K562 (cell line): ENCODE measurements at regions of chr20 and their contacts with region 1.

Region 1: GRCh38 chr20:31414380-31414779 is 8.4 kb upstream of the DEFB121 start:
- DNase-seq: no peak
- ATAC-seq: no peak
- H3K4me3 ChIP-seq: no peak overlapping the region
- H3K27ac ChIP-seq: no peak overlapping the region
- H3K4me1 ChIP-seq: no peaks in the 10 kb centered on the region
- H3K27me3 ChIP-seq: no peaks in the 10 kb centered on the region; a peak in 1 of 5 replicates
- CTCF ChIP-seq: no peak
- EP300 ChIP-seq: no peak
- POLR2A ChIP-seq: no peak
- RAD21 ChIP-seq: no peak

Region 2: DNA sequence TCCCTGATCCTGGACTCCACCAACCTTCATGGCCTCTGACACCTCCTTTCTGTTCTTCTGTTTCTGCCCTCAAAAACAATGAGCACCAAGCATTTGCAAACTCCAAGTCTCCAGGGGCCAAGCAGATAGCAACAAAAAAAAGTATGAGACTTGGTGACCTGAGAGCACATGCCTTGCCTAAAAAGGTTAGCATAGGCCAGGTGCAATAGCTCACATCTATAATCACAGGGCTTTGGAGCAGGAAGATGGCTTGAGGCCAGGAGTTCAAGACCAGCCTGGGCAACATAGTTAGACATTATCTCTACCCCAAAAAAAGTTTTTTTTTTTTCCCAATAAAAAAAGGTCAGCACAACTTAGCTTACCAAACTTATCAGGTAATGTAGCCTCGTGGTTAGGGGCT is 86.1 kb after region 1 on chr20:
- CTCF ChIA-PET with region 1: interaction called, 4 read pairs
- POLR2A ChIA-PET with region 1: no interaction called
- in situ Hi-C with region 1: no loop called
- intact Hi-C with region 1: loop called (anchors 5 kb)
- DNase-seq: no peak
- ATAC-seq: no peak
- H3K4me3 ChIP-seq: no peak overlapping the region
- H3K27ac ChIP-seq: no peak overlapping the region
- H3K4me1 ChIP-seq: peaks cover 0 to 9% of the 10 kb centered on the region in 2 experiments; a peak in 2 of 5 replicates
- H3K27me3 ChIP-seq: peaks cover 0 to 8% of the 10 kb centered on the region in 2 experiments; a peak in 2 of 5 replicates
- CTCF ChIP-seq: no peak
- EP300 ChIP-seq: no peak
- POLR2A ChIP-seq: no peak
- RAD21 ChIP-seq: no peak